Activated T-helper 2 cell treated with anti-CD3 and anti-CD28 coated beads, Interferon-gamma antibody, Interleukin-2, Interleukin-4, amounts not matched to agents 10 μg/mL and 5 μg/mL and 100 μg/mL, durations not matched to agents 14 hours and 24 hours and 36 hours (primary cell): ENCODE measurements at regions of chr6 and their contacts with region 1.

Region 1: DNA sequence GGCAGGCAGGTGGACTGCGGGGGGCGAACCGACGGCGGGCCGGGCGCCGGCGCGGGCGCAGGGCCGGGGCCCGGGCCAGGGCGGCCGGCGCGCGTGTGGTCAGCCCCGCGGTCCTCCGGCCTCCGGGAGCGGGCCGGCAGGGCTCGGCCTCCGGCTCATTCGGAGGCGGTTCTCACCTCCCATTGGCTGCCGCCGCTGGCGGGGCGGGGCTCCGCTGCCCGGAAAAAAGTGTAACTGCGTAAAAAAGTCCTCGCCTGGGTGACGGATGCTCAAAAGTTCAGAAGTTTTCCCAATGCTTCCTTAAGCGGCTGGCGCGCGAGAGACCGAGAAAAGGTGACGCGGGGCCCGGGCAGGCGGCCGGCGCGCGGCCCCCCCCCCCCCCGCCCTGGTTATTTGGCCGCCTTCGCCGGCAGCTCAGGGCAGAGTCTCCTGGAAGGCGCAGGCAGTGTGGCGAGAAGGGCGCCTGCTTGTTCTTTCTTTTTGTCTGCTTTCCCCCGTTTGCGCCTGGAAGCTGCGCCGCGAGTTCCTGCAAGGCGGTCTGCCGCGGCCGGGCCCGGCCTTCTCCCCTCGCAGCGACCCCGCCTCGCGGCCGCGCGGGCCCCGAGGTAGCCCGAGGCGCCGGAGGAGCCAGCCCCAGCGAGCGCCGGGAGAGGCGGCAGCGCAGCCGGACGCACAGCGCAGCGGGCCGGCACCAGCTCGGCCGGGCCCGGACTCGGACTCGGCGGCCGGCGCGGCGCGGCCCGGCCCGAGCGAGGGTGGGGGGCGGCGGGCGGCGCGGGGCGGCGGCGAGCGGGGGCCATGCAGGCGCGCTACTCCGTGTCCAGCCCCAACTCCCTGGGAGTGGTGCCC is at the start of gene FOXC1:
- DNase-seq: no peak
- H3K4me3 Mint-ChIP-seq: peak within 1 kb of the TSS; percentile 51
- H3K27ac Mint-ChIP-seq: peak within 1 kb of the TSS; percentile 55
- H3K4me1 Mint-ChIP-seq: peaks cover 18% of the 10 kb centered on the region
- H3K27me3 Mint-ChIP-seq: peaks cover 62% of the 10 kb centered on the region
- total RNA-seq, gene FOXC1: 0.05 and 0.07 TPM in 2 replicates

Region 2: GRCh38 chr6:1311400-1312202 is 298.3 kb before region 1 on chr6 and contains the start of gene FOXQ1:
- intact Hi-C with region 1: loop called (anchors 5 kb)
- DNase-seq: no peak
- H3K4me3 Mint-ChIP-seq: peak within 1 kb of the TSS; percentile 67
- H3K27ac Mint-ChIP-seq: peak within 1 kb of the TSS; percentile 42
- H3K4me1 Mint-ChIP-seq: peaks cover 9% of the 10 kb centered on the region
- H3K27me3 Mint-ChIP-seq: peaks cover 73% of the 10 kb centered on the region
- total RNA-seq, gene FOXQ1: not detected in 2 replicates

Region 3: DNA sequence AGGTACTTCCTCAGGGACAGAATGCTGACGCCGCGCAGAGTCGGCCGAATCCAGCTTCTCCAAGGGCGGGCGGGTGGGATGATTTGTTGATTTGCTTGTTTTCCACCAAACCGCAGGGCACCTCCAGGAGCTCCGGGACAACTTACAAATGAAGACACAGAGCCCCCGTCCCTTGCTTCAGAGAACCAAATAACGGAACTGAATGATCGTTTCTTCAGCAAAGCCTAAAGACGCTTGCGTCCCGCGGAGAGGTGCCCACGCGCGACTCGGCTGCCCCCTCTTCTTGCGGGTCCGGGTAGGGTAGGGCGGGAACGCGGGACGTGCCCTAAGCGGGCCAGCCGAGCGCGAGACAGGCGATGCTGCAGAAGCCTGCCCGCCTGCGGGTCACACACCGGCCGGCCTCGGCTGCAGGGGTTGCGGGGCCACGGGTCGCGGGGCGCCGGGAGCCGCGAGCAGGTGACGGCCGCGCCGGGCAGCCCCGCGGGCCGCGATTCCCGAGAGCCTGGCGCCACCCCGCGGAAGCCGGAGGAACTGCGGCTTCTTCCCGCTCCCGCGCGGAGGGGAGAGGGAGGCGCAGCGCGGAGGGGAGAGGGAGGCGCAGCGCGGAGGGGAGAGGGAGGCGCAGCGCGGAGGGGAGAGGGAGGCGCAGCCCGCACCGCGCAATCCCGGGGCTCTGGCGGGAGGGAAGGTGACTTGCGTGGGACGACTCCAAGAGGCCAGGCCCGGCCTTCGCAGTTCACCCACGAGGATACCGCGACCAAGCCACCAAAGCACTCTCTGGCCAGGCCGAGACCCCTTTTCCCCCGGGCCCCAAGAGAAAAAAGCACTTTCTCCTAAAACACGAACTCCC is 228.2 kb before region 1 on chr6:
- intact Hi-C with region 1: loop called (anchors 2 kb)
- DNase-seq: peak; percentile 46
- H3K4me3 Mint-ChIP-seq: no peak overlapping the region
- H3K27ac Mint-ChIP-seq: no peak overlapping the region
- H3K4me1 Mint-ChIP-seq: peaks cover 24% of the 10 kb centered on the region
- H3K27me3 Mint-ChIP-seq: peaks cover 73% of the 10 kb centered on the region

Region 4: DNA sequence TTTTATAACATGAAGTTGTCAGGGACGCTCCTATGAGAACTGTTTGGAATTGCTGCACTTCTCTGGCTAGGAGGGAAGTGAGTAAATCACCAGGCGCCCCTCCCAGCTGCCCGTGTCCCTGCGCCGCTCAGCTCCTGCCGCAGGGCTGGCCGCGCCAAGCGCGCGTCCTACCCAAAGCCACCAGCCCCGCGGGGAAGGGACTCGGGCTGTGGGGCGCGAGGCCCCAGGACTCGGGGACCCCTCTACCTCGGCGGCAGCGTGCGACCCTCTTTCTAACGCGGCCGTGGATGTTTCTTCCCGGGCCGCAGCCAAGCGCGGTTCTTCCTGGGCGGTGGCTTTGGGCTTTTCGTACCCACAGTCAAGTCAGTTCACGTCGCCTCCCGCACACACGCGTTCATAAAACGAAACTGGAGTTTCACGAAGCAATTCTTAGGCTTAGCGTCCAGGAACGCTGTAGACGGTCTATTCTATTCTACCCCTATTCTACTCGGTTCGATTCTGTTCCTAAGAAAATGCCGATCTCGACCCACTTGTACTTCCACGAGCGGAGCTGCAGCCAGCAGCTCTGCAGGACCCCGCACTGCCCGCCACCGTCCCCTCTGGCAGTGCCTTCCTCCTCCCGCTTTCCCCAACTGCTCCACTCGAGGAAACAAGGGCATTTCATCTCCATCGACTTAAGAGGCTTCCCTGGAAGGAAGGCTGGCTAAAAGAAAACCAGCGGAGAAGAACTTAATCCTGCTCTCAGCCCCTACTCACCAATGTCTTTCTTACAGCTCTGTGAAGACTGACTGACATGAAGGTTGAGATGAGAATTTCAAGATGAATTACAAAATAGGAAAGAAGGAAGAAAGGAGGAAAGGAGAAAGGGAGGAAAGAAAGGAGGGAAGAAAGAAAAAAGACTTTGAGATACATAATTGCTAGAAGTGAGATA is 15.2 kb after region 1 on chr6:
- intact Hi-C with region 1: loop called (anchors 2 kb)
- DNase-seq: no peak
- H3K4me3 Mint-ChIP-seq: peak overlapping the region; percentile 45
- H3K27ac Mint-ChIP-seq: no peak overlapping the region
- H3K4me1 Mint-ChIP-seq: peaks cover 5% of the 10 kb centered on the region
- H3K27me3 Mint-ChIP-seq: peaks cover 68% of the 10 kb centered on the region

Region 5: GRCh38 chr6:2749969-2750600 is 1140.2 kb after region 1 on chr6:
- intact Hi-C with region 1: loop called (anchors 10 kb)
- DNase-seq: peak; percentile 55
- H3K4me3 Mint-ChIP-seq: no peak overlapping the region
- H3K27ac Mint-ChIP-seq: no peak overlapping the region
- H3K4me1 Mint-ChIP-seq: peaks cover 17% of the 10 kb centered on the region
- H3K27me3 Mint-ChIP-seq: peaks cover 56% of the 10 kb centered on the region